GM10248 (cell line): ENCODE measurements at regions of chr19 and their contacts with region 1.

Region 1: GRCh38 chr19:47130591-47131227 is at the start of gene SAE1:
- DNase-seq: peak; percentile 99
- CTCF ChIP-seq: peak; percentile 78

Region 2: DNA sequence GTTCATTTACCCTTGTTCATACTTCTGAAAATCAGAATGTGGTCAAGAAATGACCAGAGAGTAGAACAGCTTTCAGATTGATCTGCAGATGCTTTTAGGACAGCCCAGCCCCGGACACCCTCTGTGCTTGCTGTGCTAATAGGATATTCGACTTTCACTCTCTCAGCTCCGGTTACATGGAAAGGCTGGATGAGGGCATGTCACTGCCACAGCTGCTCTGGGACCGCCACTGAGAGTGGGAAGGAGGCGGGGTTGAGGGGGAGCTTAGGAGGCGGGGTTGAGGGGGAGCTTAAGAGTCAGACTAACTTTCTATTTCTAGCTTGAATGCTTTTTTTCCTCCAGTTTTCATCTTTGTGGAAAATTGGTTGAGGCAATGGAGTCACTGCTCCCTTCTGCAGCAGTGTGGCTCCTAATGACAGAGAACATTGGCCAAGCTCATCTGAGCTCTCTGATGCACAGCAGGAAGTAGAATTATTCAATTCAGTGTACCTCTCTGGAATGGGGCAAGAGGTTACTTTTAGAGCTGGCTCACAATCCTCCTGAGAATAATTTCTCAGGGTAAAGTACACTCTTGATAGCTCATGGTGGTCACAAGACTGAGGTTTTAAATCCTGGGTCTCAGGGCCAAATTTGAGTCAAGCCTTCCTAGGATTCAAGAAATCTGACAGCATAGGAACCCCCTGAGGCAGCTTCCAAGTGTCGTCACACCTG is 185.6 kb before region 1 on chr19:
- CTCF ChIA-PET with region 1: no interaction called
- POLR2A ChIA-PET with region 1: no interaction called
- DNase-seq: no peak
- CTCF ChIP-seq: no peak

Region 3: GRCh38 chr19:47102346-47103060 is 28.2 kb before region 1 on chr19:
- CTCF ChIA-PET with region 1: no interaction called
- POLR2A ChIA-PET with region 1: no interaction called
- DNase-seq: no peak
- CTCF ChIP-seq: no peak

Region 4: DNA sequence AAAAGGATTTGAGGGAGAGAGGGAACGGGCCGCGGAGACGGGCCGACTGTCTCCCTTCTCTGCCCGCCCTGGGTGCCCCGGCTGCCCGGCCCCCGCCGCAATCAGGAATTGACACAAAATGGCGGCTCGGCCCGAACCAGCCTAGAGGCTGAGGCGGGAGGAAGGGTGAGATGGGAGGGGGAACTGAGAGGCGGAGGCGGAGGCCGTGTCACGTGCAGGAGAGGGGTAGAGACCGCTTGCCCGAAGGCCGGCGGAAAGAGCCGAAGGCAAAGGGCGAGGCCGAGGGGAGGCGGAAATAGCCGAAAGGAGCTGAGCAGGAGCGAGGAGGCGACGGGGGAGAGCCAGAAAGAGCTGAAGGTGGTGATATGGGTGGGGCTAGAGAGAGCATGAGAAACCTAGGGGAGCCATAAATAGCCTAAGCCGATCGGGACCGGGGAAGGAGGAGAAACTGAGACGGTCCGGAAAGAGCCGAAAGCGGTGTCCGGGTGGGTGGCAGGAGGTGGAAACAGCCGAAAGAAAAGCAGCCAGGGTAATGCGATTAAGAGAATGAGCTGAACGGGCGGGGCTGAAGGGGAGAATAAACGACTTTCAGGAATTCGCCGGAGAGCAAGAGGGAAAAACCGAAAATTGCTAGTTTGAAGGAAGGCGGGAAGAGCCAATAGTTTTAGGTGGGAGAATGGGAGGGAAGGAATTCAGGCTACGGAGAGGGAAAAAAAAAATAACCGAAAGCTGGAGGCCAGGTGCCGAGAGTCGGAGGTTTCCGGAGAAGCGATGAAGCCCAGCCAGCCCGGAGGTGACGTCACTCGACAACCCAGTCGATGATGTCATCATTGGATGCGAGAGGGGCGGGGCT is 17.5 kb before region 1 on chr19 and contains the start of gene ZC3H4:
- CTCF ChIA-PET with region 1: interaction called, 20 read pairs
- POLR2A ChIA-PET with region 1: interaction called, 11 read pairs
- DNase-seq: peak; percentile 98
- CTCF ChIP-seq: no peak

Region 5: DNA sequence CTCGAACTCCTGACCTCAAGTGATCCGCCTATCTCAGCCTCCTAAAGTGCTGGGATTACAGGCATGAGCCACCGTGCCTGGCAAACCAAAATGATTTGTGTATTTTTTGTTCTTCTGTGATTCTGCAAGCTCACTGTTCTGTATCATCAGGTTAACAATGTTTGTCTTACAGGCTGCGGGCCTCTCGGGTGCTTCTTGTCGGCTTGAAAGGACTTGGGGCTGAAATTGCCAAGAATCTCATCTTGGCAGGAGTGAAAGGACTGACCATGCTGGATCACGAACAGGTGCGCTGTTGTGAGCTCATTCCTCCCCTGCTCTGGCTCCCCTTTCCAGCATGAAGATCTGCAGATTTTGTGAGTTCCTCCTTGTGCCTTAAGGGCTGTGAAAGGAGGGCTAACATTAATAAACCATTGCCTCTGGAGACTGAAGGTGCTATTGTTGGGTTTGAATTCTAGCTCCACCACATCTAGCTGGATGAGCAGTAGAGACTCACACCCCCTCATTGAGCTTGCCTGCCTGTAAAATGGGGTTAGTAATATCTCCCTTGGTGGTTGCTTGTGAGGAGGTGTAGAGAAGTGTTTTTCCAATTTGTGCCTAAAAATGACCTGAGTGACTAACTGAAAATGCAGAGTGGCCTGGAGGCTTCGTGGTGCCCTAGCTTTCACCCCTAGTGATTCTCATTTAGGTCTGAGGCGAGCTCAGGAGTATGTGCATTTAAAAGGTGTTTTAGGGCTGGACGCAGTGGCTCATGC is 12.8 kb after region 1 on chr19:
- CTCF ChIA-PET with region 1: interaction called, 11 read pairs
- POLR2A ChIA-PET with region 1: interaction called, 5 read pairs
- DNase-seq: no peak
- CTCF ChIP-seq: no peak